ENCODE measurements at regions of chr5 and their contacts with region 1.

Region 1: DNA sequence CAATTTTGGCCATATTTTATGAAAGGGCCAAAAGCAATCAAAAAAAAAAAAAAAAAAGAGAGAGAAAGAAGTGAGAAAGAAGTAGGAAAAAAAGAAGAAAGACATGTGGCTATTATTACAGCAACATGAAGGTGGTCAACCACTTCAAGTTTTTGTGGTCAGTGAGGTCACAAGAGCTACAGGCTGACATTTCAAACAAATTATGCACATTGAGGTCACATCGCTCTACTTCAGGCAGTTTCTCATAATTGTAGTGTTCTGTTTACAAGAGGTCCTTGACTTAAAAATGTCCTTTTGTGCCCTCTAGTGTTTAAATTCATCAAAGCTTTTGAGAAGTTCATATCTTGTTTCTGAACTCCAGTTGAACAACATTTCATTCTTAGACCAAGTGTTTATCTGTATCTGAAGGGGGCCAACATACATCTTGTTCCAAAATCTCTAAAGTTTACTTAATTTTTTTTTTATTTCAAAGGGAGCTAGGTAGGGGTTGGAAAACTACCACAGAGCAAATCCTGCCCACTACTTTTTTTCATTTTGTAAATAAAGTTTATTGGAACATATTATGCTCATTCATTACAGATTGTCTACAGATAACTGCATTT is 513.1 kb downstream of the PDE4D start:
- DNase-seq: peak in 4 of 5 donors; percentile 27 to 41 (median 34)
- H3K4me3 ChIP-seq: no peak overlapping the region
- H3K4me3 Mint-ChIP-seq: no peak overlapping the region
- H3K27ac ChIP-seq: no peak overlapping the region
- H3K27ac Mint-ChIP-seq: no peak overlapping the region
- H3K4me1 ChIP-seq: no peaks in the 10 kb centered on the region
- H3K4me1 Mint-ChIP-seq: peaks cover 0 to 4% (median 3%) of the 10 kb centered on the region in 4 donors
- H3K27me3 ChIP-seq: no peaks in the 10 kb centered on the region
- H3K27me3 Mint-ChIP-seq: peaks cover 0 to 3% of the 10 kb centered on the region in 2 donors

Region 2: GRCh38 chr5:58891971-58892343 is 488.5 kb before region 1 on chr5:
- CTCF ChIA-PET with region 1: interaction called, 19 read pairs
- POLR2A ChIA-PET with region 1: no interaction called
- intact Hi-C with region 1: loop called (anchors 1 kb)
- DNase-seq: no peak
- H3K4me3 ChIP-seq: no peak overlapping the region
- H3K4me3 Mint-ChIP-seq: peak overlapping the region in 1 of 8 donors; percentile 76
- H3K27ac ChIP-seq: no peak overlapping the region
- H3K27ac Mint-ChIP-seq: no peak overlapping the region
- H3K4me1 ChIP-seq: peaks cover 20% of the 10 kb centered on the region
- H3K4me1 Mint-ChIP-seq: peaks cover 12 to 34% (median 19%) of the 10 kb centered on the region in 4 donors
- H3K27me3 ChIP-seq: no peaks in the 10 kb centered on the region
- H3K27me3 Mint-ChIP-seq: peaks cover 1% of the 10 kb centered on the region in 2 donors

Region 3: DNA sequence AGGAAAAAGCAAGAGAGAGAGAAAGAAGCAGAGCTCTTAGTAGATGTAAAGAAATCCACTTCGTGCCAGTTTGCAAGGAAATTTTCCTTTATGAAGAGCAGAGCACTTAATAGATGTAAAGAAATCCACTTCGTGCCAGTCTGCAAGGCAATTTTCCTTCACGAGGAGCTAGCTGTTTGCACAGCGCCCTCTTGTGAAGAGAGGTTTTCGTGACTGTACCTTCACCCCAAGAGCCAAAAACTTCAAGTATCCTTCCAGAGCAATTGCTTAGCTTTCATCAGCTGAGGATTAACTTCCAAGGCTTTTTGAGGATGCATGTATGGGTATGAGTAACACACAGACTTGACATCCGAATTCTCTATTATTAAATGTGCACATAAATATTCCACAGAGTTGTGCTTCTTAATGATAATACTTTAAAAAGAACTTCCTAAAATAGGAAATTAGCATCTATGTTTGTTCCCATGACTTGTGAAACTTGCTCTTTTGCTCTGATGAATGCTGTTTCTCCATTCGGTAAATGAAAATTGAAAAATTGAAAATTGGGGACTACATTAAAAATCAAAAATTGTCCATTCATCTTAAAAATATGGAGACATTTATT is 12.6 kb before region 1 on chr5:
- CTCF ChIA-PET with region 1: interaction called, 14 read pairs
- POLR2A ChIA-PET with region 1: no interaction called
- intact Hi-C with region 1: no loop called
- DNase-seq: peak in 4 of 5 donors; percentile 22 to 33 (median 28)
- H3K4me3 ChIP-seq: no peak overlapping the region
- H3K4me3 Mint-ChIP-seq: no peak overlapping the region
- H3K27ac ChIP-seq: no peak overlapping the region
- H3K27ac Mint-ChIP-seq: no peak overlapping the region
- H3K4me1 ChIP-seq: no peaks in the 10 kb centered on the region
- H3K4me1 Mint-ChIP-seq: peaks cover 0 to 2% (median under 1%) of the 10 kb centered on the region in 4 donors
- H3K27me3 ChIP-seq: no peaks in the 10 kb centered on the region
- H3K27me3 Mint-ChIP-seq: peaks cover 11 to 14% of the 10 kb centered on the region in 2 donors

Region 4: DNA sequence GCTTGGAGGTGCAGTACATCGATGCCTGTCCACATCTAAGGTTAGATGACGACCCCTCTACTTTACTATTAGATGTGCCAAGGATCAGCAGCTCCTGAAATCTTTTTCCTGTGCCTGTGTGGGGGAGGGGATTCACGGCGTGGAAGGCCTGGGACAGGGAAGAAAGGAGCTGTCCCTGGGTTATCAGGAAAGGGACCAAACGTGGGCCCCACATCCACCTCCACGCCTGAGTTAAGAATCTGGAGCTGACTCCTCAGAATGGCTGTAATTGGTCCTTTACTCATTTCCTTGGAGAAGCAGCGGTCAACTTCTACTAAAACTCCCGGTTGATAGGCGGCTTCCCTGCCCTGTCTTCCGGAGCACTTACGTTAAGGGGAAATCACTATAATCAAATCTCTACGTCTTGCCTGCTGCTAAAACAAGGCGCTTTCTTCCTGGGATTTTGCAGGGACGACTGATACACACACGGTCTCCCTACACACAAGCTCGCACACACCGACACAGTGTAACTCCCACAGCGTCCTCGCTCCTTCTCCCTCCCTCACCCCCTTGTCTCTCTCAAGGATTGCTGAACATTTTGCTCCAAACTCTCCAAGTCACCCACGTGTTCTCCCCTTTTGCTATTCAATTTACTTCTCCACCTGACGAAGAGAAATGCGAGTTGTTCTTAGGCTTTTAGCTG is 511.7 kb after region 1 on chr5:
- CTCF ChIA-PET with region 1: no interaction called
- POLR2A ChIA-PET with region 1: no interaction called
- intact Hi-C with region 1: no loop called
- DNase-seq: no peak
- H3K4me3 ChIP-seq: no peak overlapping the region
- H3K4me3 Mint-ChIP-seq: no peak overlapping the region
- H3K27ac ChIP-seq: no peak overlapping the region
- H3K27ac Mint-ChIP-seq: no peak overlapping the region
- H3K4me1 ChIP-seq: no peaks in the 10 kb centered on the region
- H3K4me1 Mint-ChIP-seq: peaks cover 0 to 15% (median 2%) of the 10 kb centered on the region in 4 donors
- H3K27me3 ChIP-seq: no peaks in the 10 kb centered on the region
- H3K27me3 Mint-ChIP-seq: peaks cover 24% of the 10 kb centered on the region in 2 donors

Measured in CD4-positive, alpha-beta memory T cell (primary cell).